ENCODE measurements at regions of chr5 and their contacts with region 1.

Region 1: GRCh38 chr5:98929697-98930298 is 991 bp upstream of the CHD1 start:
- DNase-seq: peak in 1 of 6 donors; percentile 58
- ATAC-seq: peak in 1 of 4 donors; percentile 70
- H3K4me3 ChIP-seq: peak overlapping the region; percentile 83 to 95 (median 89)
- H3K27ac ChIP-seq: peak overlapping the region; percentile 90 to 100 (median 98)
- H3K4me1 ChIP-seq: peaks cover 14 to 25% (median 25%) of the 10 kb centered on the region in 3 donors
- H3K27me3 ChIP-seq: no peaks in the 10 kb centered on the region
- CTCF ChIP-seq: no peak

Region 2: DNA sequence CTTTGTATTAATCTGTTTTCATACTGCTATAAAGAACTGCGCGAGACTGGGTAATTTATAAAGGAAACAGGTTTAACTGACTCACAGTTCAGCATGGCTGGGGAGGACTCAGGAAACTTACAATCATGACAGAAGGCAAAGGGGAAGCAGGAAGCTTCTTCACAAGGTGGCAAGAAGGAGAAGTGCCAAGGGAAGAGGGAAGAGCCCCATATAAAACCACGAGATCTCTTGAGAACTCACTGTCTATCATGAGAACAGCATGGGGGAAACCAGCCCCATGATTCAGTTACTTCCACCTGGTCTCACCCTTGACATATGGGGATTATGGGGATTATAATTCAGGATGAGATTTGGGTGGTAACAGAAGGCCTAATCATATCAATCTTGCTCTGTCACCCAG is 59.9 kb after region 1 on chr5:
- intact Hi-C with region 1: no loop called
- DNase-seq: no peak
- ATAC-seq: peak in 2 of 4 donors; percentile 29 to 36
- H3K4me3 ChIP-seq: no peak overlapping the region
- H3K27ac ChIP-seq: no peak overlapping the region
- H3K4me1 ChIP-seq: no peaks in the 10 kb centered on the region
- H3K27me3 ChIP-seq: no peaks in the 10 kb centered on the region
- CTCF ChIP-seq: no peak

Region 3: DNA sequence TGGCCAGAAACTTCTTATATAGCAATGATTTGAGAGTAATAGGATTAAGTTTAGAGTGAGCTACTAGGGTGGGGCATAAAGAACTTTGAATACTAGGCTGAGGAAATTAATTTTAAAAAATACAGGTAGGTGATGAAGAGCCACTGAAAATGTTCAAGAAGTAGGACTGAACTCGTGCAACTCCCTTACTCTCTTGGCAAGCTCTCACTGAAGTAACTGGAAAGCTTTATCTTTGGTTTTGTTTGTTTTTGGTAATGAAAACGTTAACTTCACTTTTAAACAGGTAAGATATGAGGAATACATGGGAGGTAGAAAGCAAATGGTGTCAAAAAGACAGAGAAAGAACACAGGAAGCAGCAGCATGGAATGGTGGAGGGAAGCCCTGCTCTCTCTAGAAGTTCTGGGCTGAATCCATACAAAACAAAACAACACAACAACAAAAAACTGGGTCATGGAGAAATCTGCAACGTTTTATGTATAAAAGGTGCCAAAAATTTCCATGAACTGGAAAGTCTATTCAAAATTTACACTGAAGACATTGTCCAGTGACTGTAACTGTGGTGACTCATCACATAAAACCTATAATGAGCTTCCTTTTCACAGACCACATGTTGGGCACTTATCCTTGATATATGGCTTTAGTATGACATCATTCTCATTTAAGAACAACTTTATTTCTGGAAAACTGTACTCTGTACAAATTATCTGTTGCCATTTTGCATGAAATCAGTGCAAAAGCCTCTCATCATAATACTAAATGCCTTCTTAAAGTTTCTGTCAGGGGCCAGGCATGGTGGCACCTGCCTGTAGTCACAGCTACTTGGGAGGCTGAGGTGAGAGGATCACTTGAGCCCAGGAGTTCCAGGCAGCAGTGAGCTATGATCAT is 90.3 kb after region 1 on chr5:
- intact Hi-C with region 1: loop called in 1 of 3 experiments (anchors 10 kb)
- DNase-seq: no peak
- ATAC-seq: peak; percentile 47 to 93 (median 82)
- H3K4me3 ChIP-seq: no peak overlapping the region
- H3K27ac ChIP-seq: peak overlapping the region in 2 of 4 donors; percentile 60 to 67
- H3K4me1 ChIP-seq: peaks cover 6 to 23% (median 13%) of the 10 kb centered on the region in 3 donors
- H3K27me3 ChIP-seq: no peaks in the 10 kb centered on the region
- CTCF ChIP-seq: no peak

Measured in pancreas (tissue), 10 donors.